Activated T-helper 1 cell treated with anti-CD3 and anti-CD28 coated beads, Interleukin-12 subunit alpha, Interleukin-12 subunit beta, Interleukin-2, Interleukin-4 antibody, amounts not matched to agents 30 ng/mL and 10 ng/mL and 1 ng/mL, durations not matched to agents 14 hours and 24 hours and 36 hours (primary cell): ENCODE measurements at regions of chr18 and their contacts with region 1.

Region 1: GRCh38 chr18:77170890-77171410 is 38.4 kb upstream of the MBP start:
- DNase-seq: no peak
- H3K4me3 Mint-ChIP-seq: no peak overlapping the region
- H3K27ac Mint-ChIP-seq: no peak overlapping the region
- H3K4me1 Mint-ChIP-seq: no peaks in the 10 kb centered on the region
- H3K27me3 Mint-ChIP-seq: no peaks in the 10 kb centered on the region

Region 2: GRCh38 chr18:77140439-77141109 is 30.4 kb before region 1 on chr18:
- intact Hi-C with region 1: loop called (anchors 2 kb)
- DNase-seq: peak; percentile 45
- H3K4me3 Mint-ChIP-seq: peak overlapping the region; percentile 23
- H3K27ac Mint-ChIP-seq: peak overlapping the region; percentile 32
- H3K4me1 Mint-ChIP-seq: peaks cover 23% of the 10 kb centered on the region
- H3K27me3 Mint-ChIP-seq: no peaks in the 10 kb centered on the region